GM10248 (cell line): ENCODE measurements at regions of chr2 and their contacts with region 1.

Region 1: GRCh38 chr2:43318791-43319190 is 92.4 kb upstream of the ZFP36L2 start:
- DNase-seq: no peak
- CTCF ChIP-seq: no peak

Region 2: GRCh38 chr2:43070039-43070438 is 248.8 kb before region 1 on chr2:
- CTCF ChIA-PET with region 1: no interaction called
- POLR2A ChIA-PET with region 1: no interaction called
- DNase-seq: no peak
- CTCF ChIP-seq: no peak

Region 3: GRCh38 chr2:43331422-43331821 is 12.6 kb after region 1 on chr2:
- CTCF ChIA-PET with region 1: interaction called, 43 read pairs
- POLR2A ChIA-PET with region 1: no interaction called
- DNase-seq: no peak
- CTCF ChIP-seq: no peak